OCI-LY7 (cell line): ENCODE measurements at regions of chrX and their contacts with region 1.

Region 1: GRCh38 chrX:19245711-19246269 is 97.9 kb upstream of the PDHA1 start:
- DNase-seq: no peak
- H3K4me3 ChIP-seq: no peak overlapping the region
- H3K27ac ChIP-seq: no peak overlapping the region
- H3K4me1 ChIP-seq: no peaks in the 10 kb centered on the region
- CTCF ChIP-seq: no peak

Region 2: DNA sequence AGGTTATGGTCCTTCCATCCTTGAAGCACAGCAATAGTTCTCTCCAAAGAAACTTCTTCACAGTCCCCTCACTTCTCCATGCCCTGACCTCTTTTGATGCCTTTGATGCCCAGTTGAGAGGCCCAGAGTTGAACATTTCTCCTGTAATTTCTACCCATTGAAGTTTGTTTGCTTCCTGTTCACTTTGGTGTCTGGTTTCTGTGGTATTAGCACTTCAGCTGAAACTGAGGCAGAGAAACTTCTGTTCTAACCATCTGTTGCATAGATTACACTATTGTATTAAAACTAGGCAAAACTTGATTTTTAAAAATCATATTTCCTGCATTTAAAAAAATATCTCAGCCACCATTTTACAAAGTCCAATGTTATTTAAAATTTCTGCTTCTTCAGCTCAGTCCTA is 33.8 kb before region 1 on chrX:
- CTCF ChIA-PET with region 1: no interaction called
- POLR2A ChIA-PET with region 1: no interaction called
- intact Hi-C with region 1: no loop called
- DNase-seq: no peak
- H3K4me3 ChIP-seq: no peak overlapping the region
- H3K27ac ChIP-seq: no peak overlapping the region
- H3K4me1 ChIP-seq: no peaks in the 10 kb centered on the region
- CTCF ChIP-seq: no peak

Region 3: DNA sequence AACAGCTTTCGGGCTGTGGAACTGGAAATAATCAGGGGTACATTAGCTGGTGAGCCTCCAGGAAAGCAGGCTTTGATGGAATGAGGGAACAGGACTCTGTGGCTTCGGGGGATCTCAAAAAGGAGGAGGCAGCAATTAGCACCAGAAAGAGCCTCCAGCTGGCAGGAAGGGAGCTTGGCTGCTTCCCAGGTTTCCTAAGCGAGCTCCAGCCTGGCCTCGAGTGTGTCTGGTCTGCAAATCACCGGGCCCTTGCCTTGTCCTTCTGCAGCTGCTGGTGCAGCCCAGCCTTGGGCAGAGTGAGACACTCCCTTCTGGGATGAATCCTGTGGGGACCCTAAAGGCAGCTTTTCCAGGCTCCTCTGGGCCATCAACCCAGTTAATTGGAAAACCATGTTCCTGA is 87.2 kb after region 1 on chrX:
- CTCF ChIA-PET with region 1: no interaction called
- POLR2A ChIA-PET with region 1: no interaction called
- intact Hi-C with region 1: no loop called
- DNase-seq: no peak
- H3K4me3 ChIP-seq: no peak overlapping the region
- H3K27ac ChIP-seq: no peak overlapping the region
- H3K4me1 ChIP-seq: no peaks in the 10 kb centered on the region
- CTCF ChIP-seq: no peak

Region 4: GRCh38 chrX:19487520-19488200 is 241.9 kb after region 1 on chrX:
- CTCF ChIA-PET with region 1: no interaction called
- POLR2A ChIA-PET with region 1: no interaction called
- intact Hi-C with region 1: loop called (anchors 5 kb)
- DNase-seq: no peak
- H3K4me3 ChIP-seq: no peak overlapping the region
- H3K27ac ChIP-seq: no peak overlapping the region
- H3K4me1 ChIP-seq: no peaks in the 10 kb centered on the region
- CTCF ChIP-seq: no peak